Mammary epithelial cell (primary cell): ENCODE measurements at regions of chr2 and their contacts with region 1.

Region 1: DNA sequence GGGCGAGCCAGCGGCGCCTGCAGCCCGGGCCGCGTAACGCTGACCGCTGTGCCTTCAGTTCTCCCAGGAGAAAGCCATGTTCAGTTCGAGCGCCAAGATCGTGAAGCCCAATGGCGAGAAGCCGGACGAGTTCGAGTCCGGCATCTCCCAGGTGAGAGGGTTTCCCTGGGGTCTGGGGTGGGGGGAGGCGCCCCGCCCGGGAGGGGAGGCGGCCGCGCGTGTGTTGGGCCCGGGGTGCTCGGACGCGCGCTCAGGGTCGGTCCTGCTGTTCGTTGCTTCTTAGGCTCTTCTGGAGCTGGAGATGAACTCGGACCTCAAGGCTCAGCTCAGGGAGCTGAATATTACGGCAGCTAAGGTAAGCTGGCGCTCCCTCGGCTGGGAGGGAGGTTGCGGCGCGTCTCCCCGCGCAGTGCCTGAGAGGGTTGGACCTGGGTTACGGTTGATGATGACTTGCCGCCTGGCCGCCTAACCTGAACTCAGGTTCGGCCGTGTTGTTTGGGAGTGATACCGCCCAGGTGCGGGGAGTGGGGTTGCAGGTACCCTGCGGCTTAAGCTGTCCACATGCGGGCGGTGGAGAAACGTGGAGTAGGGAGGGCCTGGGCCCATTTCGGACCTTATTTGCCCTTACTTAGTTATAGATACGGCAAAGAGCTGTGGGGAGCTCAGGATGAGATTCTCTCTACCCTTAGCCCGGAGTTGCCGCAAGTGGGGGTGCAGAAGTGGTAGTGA is 638 bp downstream of the RPS7 start:
- DNase-seq: peak; percentile 14
- H3K4me3 ChIP-seq: peak overlapping the region; percentile 64 to 94 (median 70)
- H3K27ac ChIP-seq: peak overlapping the region; percentile 70
- H3K4me1 ChIP-seq: peaks cover 25% of the 10 kb centered on the region
- H3K27me3 ChIP-seq: no peaks in the 10 kb centered on the region
- CTCF ChIP-seq: no peak

Region 2: DNA sequence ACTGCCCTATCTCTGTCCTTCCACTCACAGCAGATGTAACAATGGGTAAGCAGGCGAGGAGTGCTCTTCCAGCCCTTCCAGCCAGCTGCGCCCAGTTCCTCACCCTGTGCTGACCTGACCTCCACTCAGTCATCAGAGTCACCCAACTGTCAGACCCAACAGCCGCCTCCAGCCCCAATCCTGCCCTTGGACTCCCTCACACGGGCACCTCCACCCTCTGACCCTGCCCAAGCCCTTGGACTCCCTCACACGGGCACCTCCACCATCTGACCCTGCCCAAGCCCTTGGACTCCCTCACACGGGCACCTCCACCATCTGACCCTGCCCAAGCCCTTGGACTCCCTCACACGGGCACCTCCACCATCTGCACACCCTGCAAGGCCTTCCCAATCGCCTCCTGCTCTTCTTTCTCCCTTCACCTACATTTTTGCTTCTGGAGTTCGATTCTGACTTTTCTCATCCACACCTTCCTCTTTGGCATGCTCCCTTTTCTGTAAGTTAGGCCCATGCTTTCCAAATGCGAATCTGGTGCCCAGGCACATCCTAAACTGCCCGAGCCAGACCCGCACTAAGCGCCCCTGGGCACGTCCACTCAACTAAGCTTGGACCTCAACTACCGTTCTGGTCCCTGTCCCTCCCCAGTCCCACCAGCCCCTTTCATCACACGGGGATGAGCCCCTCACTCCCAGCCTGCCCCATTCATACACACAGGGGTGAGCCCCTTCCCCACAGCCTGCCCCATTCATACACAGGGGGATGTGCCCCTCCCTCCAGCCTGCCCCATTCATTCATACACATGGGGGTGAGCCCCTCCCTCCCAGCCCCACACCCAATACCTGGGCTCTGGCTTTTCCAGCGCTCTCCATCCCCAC is 213.9 kb before region 1 on chr2:
- CTCF ChIA-PET with region 1: no interaction called
- dilution Hi-C with region 1: no loop called
- in situ Hi-C with region 1: no loop called
- intact Hi-C with region 1: no loop called
- DNase-seq: no peak
- H3K4me3 ChIP-seq: no peak overlapping the region
- H3K27ac ChIP-seq: no peak overlapping the region
- H3K4me1 ChIP-seq: no peaks in the 10 kb centered on the region
- H3K27me3 ChIP-seq: no peaks in the 10 kb centered on the region
- CTCF ChIP-seq: no peak

Region 3: DNA sequence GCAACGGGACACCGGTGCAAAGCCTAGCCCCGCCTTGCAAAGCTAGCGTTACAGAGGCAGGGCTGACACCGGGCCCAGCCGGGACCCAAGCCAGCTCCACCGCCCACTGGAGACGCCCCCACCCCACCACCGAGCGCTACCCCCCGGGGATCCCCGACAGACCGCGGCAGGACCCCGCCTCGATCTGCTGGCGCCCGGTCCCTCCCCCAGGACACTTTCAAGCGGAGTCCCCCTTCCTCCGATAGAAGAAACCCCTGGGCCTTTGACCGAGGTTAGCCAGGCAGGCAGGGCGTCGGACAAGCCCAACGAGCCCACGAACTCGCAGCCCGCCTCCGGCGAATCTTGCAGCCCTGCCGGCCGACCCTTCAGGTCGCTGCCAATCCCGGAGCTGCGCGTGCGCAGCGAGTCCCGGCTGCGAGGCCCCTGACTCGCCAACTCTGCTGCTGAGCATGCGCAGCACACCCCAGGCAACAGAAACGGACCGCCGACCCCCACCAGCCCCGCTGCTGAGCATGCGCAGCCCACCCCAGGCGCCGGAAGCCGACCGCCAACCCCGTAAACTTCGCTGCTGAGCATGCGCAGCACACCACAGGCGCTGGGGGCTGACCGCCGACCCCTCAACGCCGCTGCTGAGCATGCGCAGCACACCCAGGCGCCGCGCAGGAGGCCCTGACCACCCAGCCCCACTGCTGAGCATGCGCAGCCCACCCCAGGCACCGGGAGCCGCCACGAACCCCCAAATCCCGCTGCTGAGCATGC is 57.0 kb before region 1 on chr2:
- CTCF ChIA-PET with region 1: no interaction called
- dilution Hi-C with region 1: no loop called
- in situ Hi-C with region 1: no loop called
- intact Hi-C with region 1: loop called (anchors 1 kb)
- DNase-seq: peak; percentile 95
- H3K4me3 ChIP-seq: peak overlapping the region; percentile 63 to 92 (median 80)
- H3K27ac ChIP-seq: peak overlapping the region; percentile 61
- H3K4me1 ChIP-seq: peaks cover 12% of the 10 kb centered on the region
- H3K27me3 ChIP-seq: no peaks in the 10 kb centered on the region
- CTCF ChIP-seq: no peak

Region 4: DNA sequence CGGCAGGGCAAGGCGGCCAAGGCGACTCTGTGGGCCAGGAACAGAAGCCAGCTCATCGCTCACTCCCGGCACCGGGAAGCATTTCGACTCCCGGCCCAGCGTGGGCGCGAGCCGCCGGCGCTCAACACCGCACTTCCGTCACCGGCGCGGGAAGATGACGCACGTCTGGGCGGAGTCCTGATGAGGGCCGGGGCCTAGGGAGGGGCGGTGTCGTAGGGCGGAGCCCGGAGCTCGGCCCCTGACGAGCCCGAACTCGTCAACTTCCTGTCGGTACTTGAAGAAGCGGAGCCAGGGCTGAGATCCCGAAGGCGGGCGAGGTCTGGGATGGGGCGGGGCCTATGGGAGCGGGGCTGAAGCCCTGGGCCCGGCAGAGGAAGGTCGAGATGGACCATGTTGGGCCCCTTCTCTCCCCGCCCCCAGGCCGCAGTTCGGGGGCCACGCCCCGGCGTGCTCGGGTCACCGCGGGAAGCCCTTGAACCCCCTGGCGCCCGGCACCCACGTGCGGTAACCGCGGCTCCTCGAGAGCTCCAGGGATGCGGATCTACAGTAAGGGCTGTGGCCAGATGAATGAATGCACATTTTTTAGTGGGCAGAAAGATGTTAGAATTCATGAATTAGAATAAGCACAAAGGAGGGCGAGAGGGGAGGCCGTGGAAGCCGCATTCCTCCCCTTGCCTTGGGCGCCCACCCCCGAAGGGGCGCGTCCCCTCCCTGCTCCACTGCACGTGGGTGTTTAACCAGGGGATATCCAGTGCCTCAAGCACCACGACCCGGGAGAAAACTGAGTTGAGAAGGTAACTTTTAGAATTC is 17.3 kb before region 1 on chr2 and contains the start of gene RNASEH1:
- CTCF ChIA-PET with region 1: no interaction called
- dilution Hi-C with region 1: no loop called
- in situ Hi-C with region 1: no loop called
- intact Hi-C with region 1: loop called (anchors 1 kb)
- DNase-seq: peak; percentile 98
- H3K4me3 ChIP-seq: peak within 1 kb of the TSS; percentile 81 to 86 (median 83)
- H3K27ac ChIP-seq: peak within 1 kb of the TSS; percentile 74
- H3K4me1 ChIP-seq: peaks cover 10% of the 10 kb centered on the region
- H3K27me3 ChIP-seq: no peaks in the 10 kb centered on the region
- CTCF ChIP-seq: no peak
- total RNA-seq, gene RNASEH1: 29.2 to 33.7 TPM

Region 5: DNA sequence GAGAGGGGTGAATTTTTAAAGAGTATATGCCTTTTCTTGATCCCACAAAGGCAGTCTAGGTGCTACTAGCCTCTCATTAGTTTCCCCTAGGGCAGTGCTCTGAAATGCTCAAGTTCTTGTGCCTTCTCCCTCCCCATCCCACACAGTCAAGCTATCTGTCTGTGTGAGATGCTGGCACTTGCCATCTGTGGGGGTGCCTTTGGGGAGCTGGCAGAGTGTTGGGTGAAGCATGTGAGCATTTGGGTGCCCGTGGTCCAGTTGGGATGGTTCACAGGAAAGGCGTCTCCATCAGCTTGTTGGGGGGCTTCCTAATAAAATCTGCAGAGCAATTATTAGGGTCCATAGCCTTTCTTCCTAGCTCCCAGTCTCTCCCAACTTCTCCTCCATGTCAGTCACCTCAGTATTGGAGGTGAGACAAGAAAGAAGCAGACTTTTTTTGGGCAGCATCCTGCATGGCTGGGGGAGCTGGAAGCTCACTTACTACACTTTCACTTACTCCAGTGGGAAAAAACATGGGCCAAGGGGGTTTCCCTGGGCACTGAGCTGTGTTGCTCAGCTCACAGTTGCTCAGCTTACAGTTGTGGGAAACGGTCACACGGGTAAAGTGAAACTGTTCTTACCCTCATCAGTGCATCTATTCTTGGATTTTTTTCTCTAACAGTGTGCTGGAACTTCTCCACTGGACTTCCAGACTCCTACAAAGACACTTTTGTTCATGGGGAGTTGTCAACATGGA is 48.5 kb after region 1 on chr2:
- CTCF ChIA-PET with region 1: no interaction called
- dilution Hi-C with region 1: no loop called
- in situ Hi-C with region 1: no loop called
- intact Hi-C with region 1: loop called (anchors 5 kb)
- DNase-seq: peak; percentile 5
- H3K4me3 ChIP-seq: no peak overlapping the region
- H3K27ac ChIP-seq: no peak overlapping the region
- H3K4me1 ChIP-seq: peaks cover 5% of the 10 kb centered on the region
- H3K27me3 ChIP-seq: no peaks in the 10 kb centered on the region
- CTCF ChIP-seq: no peak